MCF 10A (cell line): ENCODE measurements at regions of chr20 and their contacts with region 1.

Region 1: GRCh38 chr20:48657475-48658470 is 170.0 kb downstream of the PREX1 start:
- DNase-seq: peak; percentile 88
- H3K4me3 Mint-ChIP-seq: no peak overlapping the region
- H3K27ac Mint-ChIP-seq: no peak overlapping the region
- H3K4me1 Mint-ChIP-seq: peaks cover 19% of the 10 kb centered on the region
- H3K27me3 Mint-ChIP-seq: peaks cover 51% of the 10 kb centered on the region
- CTCF ChIP-seq: peak; percentile 96

Region 2: GRCh38 chr20:48635433-48636310 is 22.1 kb before region 1 on chr20:
- CTCF ChIA-PET with region 1: interaction called, 15 read pairs
- POLR2A ChIA-PET with region 1: no interaction called
- intact Hi-C with region 1: no loop called
- DNase-seq: peak; percentile 51
- H3K4me3 Mint-ChIP-seq: no peak overlapping the region
- H3K27ac Mint-ChIP-seq: no peak overlapping the region
- H3K4me1 Mint-ChIP-seq: no peaks in the 10 kb centered on the region
- H3K27me3 Mint-ChIP-seq: peaks cover 31% of the 10 kb centered on the region
- CTCF ChIP-seq: peak; percentile 83

Region 3: GRCh38 chr20:48685861-48686771 is 28.3 kb after region 1 on chr20:
- CTCF ChIA-PET with region 1: interaction called, 18 read pairs
- POLR2A ChIA-PET with region 1: no interaction called
- intact Hi-C with region 1: no loop called
- DNase-seq: peak; percentile 65
- H3K4me3 Mint-ChIP-seq: no peak overlapping the region
- H3K27ac Mint-ChIP-seq: no peak overlapping the region
- H3K4me1 Mint-ChIP-seq: peaks cover 10% of the 10 kb centered on the region
- H3K27me3 Mint-ChIP-seq: no peaks in the 10 kb centered on the region
- CTCF ChIP-seq: no peak

Region 4: GRCh38 chr20:48801238-48801637 is 143.5 kb after region 1 on chr20:
- CTCF ChIA-PET with region 1: interaction called, 12 read pairs
- POLR2A ChIA-PET with region 1: no interaction called
- intact Hi-C with region 1: no loop called
- DNase-seq: no peak
- H3K4me3 Mint-ChIP-seq: no peak overlapping the region
- H3K27ac Mint-ChIP-seq: no peak overlapping the region
- H3K4me1 Mint-ChIP-seq: no peaks in the 10 kb centered on the region
- H3K27me3 Mint-ChIP-seq: peaks cover 58% of the 10 kb centered on the region
- CTCF ChIP-seq: no peak

Region 5: GRCh38 chr20:48904365-48905296 is 246.9 kb after region 1 on chr20:
- CTCF ChIA-PET with region 1: interaction called, 365 read pairs
- POLR2A ChIA-PET with region 1: interaction called, 18 read pairs
- intact Hi-C with region 1: loop called (anchors 1 kb)
- DNase-seq: peak; percentile 62
- H3K4me3 Mint-ChIP-seq: no peak overlapping the region
- H3K27ac Mint-ChIP-seq: no peak overlapping the region
- H3K4me1 Mint-ChIP-seq: peaks cover 4% of the 10 kb centered on the region
- H3K27me3 Mint-ChIP-seq: peaks cover 50% of the 10 kb centered on the region
- CTCF ChIP-seq: peak; percentile 68

Region 6: GRCh38 chr20:48949304-48950170 is 291.8 kb after region 1 on chr20:
- CTCF ChIA-PET with region 1: interaction called, 11 read pairs
- POLR2A ChIA-PET with region 1: no interaction called
- intact Hi-C with region 1: no loop called
- DNase-seq: no peak
- H3K4me3 Mint-ChIP-seq: no peak overlapping the region
- H3K27ac Mint-ChIP-seq: no peak overlapping the region
- H3K4me1 Mint-ChIP-seq: no peaks in the 10 kb centered on the region
- H3K27me3 Mint-ChIP-seq: no peaks in the 10 kb centered on the region
- CTCF ChIP-seq: no peak